Esophagus squamous epithelium (tissue), 5 donors: ENCODE measurements at regions of chr4 and their contacts with region 1.

Region 1: GRCh38 chr4:186067757-186068385 is 1.1 kb upstream of the TLR3 start:
- DNase-seq: peak; percentile 2
- H3K4me3 ChIP-seq: peak overlapping the region; percentile 34 to 67 (median 56)
- H3K27ac ChIP-seq: peak overlapping the region; percentile 45 to 88 (median 76)
- H3K4me1 ChIP-seq: peaks cover 0 to 32% (median 9%) of the 10 kb centered on the region in 3 donors
- H3K27me3 ChIP-seq: no peaks in the 10 kb centered on the region
- CTCF ChIP-seq: peak in 5 of 6 experiments; percentile 31 to 61 (median 55)
- POLR2A ChIP-seq: no peak

Region 2: GRCh38 chr4:186015212-186015785 is 52.6 kb before region 1 on chr4:
- intact Hi-C with region 1: no loop called
- DNase-seq: no peak
- H3K4me3 ChIP-seq: no peak overlapping the region
- H3K27ac ChIP-seq: no peak overlapping the region
- H3K4me1 ChIP-seq: no peaks in the 10 kb centered on the region
- H3K27me3 ChIP-seq: no peaks in the 10 kb centered on the region
- CTCF ChIP-seq: no peak
- POLR2A ChIP-seq: no peak

Region 3: DNA sequence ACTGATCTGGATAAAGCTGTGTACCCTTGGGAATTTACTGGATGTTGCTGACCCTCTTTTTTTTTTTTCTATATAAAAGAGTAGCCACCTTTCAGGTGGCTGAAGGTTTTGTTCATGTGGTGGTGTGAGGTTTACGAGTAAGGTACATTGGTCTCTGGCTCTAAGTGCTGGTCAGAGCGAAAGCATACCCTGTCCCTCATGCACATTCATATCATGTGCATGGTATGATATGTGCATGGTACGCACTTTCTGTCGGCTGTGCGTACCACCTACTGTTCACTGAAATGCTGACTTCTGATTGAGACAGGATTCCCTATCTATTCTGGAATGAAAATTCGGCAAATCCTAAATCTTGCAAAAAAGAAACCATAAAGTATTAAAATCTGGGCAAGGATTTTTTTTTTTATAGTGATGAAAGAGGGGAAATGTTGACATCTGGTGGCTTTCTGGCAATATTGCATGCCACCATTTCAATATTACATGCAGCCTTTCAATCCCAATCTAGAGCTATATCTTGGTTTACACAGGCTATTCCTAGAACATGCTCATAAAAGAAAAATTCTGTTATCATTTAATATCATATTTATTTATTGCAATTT is 69.4 kb after region 1 on chr4:
- intact Hi-C with region 1: loop called (anchors 5 kb)
- DNase-seq: no peak
- H3K4me3 ChIP-seq: peak overlapping the region in 1 of 4 donors; percentile 26
- H3K27ac ChIP-seq: no peak overlapping the region
- H3K4me1 ChIP-seq: peaks cover 0 to 11% (median 0%) of the 10 kb centered on the region in 3 donors
- H3K27me3 ChIP-seq: no peaks in the 10 kb centered on the region
- CTCF ChIP-seq: peak in 5 of 6 experiments; percentile 55 to 68 (median 66)
- POLR2A ChIP-seq: no peak